Endothelial cell of umbilical vein (primary cell): ENCODE measurements at regions of chr1 and their contacts with region 1.

Region 1: GRCh38 chr1:241485554-241485992 is 34.0 kb downstream of the FH start:
- DNase-seq: peak; percentile 44
- H3K4me3 ChIP-seq: no peak overlapping the region
- H3K27ac ChIP-seq: no peak overlapping the region
- H3K4me1 ChIP-seq: peaks cover 40% of the 10 kb centered on the region
- H3K27me3 ChIP-seq: no peaks in the 10 kb centered on the region
- CTCF ChIP-seq: peak; percentile 49 to 53
- POLR2A ChIP-seq: no peak

Region 2: DNA sequence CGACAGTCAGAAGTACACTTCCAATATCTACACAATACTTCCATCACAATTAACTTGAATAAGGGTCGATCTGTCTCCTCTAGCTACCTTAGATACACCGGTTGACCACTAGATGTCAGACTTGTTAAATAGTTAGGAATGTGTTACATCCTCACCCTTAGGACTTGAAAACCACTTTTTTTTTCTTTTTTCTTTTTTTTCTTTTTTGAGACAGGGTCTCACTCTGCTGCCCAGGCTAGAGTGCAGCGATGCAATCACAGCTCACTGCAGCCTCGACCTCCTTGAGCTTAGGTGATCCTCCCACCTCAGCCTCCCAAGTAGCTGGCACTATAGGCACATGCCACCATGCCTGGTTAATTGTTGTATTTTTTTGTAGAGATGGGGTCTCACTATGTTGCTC is 753.2 kb before region 1 on chr1:
- CTCF ChIA-PET with region 1: interaction called, 56 read pairs
- POLR2A ChIA-PET with region 1: no interaction called
- dilution Hi-C with region 1: no loop called
- intact Hi-C with region 1: loop called (anchors 1 kb)
- DNase-seq: peak; percentile 70
- H3K4me3 ChIP-seq: no peak overlapping the region
- H3K27ac ChIP-seq: no peak overlapping the region
- H3K4me1 ChIP-seq: no peaks in the 10 kb centered on the region
- H3K27me3 ChIP-seq: no peaks in the 10 kb centered on the region
- CTCF ChIP-seq: peak; percentile 55
- POLR2A ChIP-seq: no peak

Region 3: DNA sequence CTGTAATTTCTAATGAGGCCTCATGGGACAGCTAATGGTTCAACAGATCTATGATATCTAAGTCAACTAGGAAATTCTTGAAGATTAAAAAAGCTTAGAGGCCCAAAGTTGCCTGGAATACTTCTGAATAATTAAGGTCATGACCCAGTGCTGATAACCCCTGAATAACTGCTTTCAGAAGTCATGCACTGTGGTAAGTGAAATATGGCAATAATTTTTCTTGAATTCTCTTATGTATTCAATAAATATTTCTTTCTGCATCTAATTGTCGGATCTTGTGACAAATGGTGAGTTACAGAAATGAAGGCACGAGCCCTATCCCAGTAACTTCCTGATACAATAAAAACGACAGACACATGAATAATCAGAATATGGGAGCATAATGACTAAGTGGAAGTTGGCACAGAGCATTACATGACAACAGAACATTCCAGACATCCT is 654.4 kb before region 1 on chr1:
- CTCF ChIA-PET with region 1: interaction called, 13 read pairs
- POLR2A ChIA-PET with region 1: no interaction called
- dilution Hi-C with region 1: no loop called
- intact Hi-C with region 1: loop called (anchors 2 kb)
- DNase-seq: peak; percentile 89
- H3K4me3 ChIP-seq: no peak overlapping the region
- H3K27ac ChIP-seq: peak overlapping the region; percentile 67
- H3K4me1 ChIP-seq: peaks cover 13% of the 10 kb centered on the region
- H3K27me3 ChIP-seq: no peaks in the 10 kb centered on the region
- CTCF ChIP-seq: no peak
- POLR2A ChIP-seq: no peak

Region 4: DNA sequence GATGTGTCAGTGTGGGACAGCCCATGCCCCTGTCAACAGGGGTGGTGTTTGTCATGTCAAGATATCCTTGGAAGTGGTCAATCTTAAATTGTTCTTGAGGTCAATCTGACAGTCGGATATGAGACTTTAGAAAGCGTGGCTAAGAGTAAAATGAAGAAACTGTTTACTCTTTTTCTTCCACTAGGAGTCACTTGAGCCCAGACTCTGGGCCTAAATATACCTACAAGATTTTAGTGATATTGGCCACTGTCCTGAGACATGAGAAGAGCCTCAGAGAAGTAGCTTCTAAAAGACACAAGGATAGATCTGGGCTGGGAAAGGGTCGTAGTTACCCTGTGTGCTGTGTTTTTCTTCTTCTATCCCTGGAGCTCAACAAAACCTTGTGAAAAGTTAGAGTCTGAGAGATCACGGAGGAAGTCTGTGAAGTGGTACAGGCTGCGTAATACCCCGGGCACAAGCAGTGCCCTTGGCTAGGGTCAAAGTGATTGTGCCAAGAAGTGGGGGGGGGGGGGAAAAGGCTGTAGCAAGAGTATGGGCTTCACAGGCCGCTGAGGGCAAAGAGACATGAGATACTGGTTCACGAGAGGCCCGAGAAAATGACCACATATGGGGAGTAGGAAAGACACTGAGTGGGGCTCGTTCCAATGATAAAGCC is 518.4 kb before region 1 on chr1:
- CTCF ChIA-PET with region 1: interaction called, 24 read pairs
- POLR2A ChIA-PET with region 1: no interaction called
- dilution Hi-C with region 1: no loop called
- intact Hi-C with region 1: no loop called
- DNase-seq: peak; percentile 4
- H3K4me3 ChIP-seq: no peak overlapping the region
- H3K27ac ChIP-seq: no peak overlapping the region
- H3K4me1 ChIP-seq: no peaks in the 10 kb centered on the region
- H3K27me3 ChIP-seq: no peaks in the 10 kb centered on the region
- CTCF ChIP-seq: peak in 1 of 2 donors; percentile 6
- POLR2A ChIP-seq: no peak

Region 5: DNA sequence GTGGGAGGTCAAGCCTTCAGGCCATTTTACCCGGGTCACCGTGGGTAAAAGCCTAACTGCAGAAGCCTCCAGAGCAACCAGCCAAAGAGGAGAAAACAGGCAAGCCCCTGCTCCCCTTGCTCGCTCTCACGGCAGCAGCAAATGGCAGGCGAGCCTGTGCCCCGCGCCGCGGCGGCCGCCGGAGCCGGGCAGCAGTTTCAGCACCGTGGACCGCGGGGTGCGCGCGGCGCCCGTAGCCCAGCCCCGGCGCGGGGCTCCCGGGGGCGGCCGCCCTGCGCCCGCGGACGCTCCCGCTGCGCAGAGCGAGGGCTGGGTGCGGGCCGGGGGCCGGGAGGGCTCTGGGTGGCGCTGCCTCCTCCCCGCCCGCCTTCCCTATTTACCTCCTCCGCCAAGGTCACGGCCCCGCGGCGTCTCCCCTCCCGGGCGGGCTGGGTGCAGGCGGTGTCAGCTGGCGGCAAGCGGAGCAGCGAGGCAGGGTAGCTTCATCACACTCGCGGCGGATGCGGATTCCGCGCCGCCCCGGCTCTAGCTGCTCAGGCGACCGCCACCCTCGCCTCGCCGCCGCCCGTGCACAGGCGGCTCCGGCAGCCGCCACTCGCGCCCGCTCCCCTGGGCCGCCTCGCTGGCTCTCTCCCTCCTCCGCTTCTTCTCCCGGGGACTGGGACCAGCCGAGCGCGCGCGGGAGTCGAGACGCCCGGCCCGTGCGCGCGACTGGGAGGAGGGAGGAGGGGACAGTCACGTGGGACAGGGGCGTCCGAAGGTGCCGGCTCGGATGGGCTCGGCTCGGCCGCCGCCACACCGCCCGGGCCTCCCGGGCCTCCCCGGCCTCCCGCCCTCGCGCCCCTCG is 128.8 kb before region 1 on chr1 and contains the start of gene RGS7:
- CTCF ChIA-PET with region 1: interaction called, 10 read pairs
- POLR2A ChIA-PET with region 1: no interaction called
- dilution Hi-C with region 1: no loop called
- intact Hi-C with region 1: loop called (anchors 2 kb)
- DNase-seq: peak; percentile 60
- H3K4me3 ChIP-seq: peak within 1 kb of the TSS; percentile 43 to 71 (median 45)
- H3K27ac ChIP-seq: no peak within 1 kb of the TSS
- H3K4me1 ChIP-seq: peaks cover 3% of the 10 kb centered on the region
- H3K27me3 ChIP-seq: no peaks in the 10 kb centered on the region
- CTCF ChIP-seq: no peak
- POLR2A ChIP-seq: no peak
- total RNA-seq, gene RGS7: 0.44 and 1.2 TPM in 2 replicates

Region 6: DNA sequence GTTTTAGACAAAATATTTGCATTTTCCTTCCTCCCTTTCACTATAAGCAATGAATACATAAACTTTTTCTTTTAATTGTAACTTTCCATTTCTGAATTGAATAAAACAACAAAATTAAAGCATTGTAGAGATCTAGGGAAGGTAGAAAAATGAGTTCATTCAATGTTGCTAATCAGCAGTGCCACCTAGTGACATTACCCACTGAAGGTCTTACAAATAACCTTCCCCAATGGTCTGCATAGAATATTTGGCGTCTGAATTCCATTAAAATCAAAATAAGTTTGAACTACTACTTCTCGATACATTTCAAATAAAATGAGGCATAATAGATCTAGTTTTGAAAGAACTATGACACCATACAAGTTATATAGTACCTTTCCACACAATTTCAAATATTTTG is 14.3 kb after region 1 on chr1:
- CTCF ChIA-PET with region 1: interaction called, 10 read pairs
- POLR2A ChIA-PET with region 1: no interaction called
- dilution Hi-C with region 1: no loop called
- intact Hi-C with region 1: no loop called
- DNase-seq: peak; percentile 59
- H3K4me3 ChIP-seq: no peak overlapping the region
- H3K27ac ChIP-seq: no peak overlapping the region
- H3K4me1 ChIP-seq: no peaks in the 10 kb centered on the region
- H3K27me3 ChIP-seq: no peaks in the 10 kb centered on the region
- CTCF ChIP-seq: peak; percentile 24 to 42
- POLR2A ChIP-seq: no peak

Region 7: DNA sequence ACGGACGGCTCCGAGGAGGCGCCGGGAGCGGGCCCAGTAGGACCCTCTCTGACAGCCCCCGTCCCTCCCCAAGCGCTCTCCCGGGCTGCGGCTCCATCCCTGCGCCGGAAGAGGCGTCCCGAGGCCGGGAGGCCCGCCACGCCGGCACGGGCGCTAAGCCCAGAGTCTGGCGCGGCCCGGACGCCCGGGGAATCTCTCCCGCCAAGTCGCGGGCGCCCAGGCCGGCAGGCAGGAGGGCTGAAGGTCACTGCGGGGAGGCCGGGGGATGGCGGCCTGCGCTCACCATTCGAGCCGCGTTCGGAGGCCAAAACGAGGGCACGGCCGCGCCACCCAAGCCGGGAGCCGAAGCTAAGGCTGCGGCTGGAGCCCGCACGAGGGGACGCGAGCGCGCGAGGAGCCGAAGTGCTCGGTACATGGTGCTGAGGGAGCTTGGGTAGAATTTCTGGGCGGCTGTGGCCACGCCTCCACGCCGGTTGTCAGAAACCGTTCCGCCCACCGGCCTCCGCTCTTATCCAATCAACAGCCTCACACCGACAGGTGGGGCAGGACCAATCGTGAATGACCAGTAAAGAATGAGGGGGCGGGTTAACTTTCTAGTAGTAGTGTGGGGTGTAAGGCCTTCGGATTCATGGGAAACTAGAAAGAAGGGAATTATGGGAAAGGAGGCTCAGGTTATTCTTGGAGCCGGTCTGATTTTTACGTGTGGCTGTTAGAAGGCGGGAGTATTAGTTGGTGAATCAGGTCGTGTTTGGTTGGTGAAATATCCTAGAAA is 33.9 kb after region 1 on chr1 and contains the start of gene FH:
- CTCF ChIA-PET with region 1: interaction called, 3 read pairs
- POLR2A ChIA-PET with region 1: no interaction called
- dilution Hi-C with region 1: no loop called
- intact Hi-C with region 1: loop called (anchors 1 kb)
- DNase-seq: peak; percentile 98
- H3K4me3 ChIP-seq: peak within 1 kb of the TSS; percentile 89 to 93 (median 93)
- H3K27ac ChIP-seq: peak within 1 kb of the TSS; percentile 37
- H3K4me1 ChIP-seq: peaks cover 13% of the 10 kb centered on the region
- H3K27me3 ChIP-seq: peaks cover 14 to 38% of the 10 kb centered on the region in 2 experiments
- CTCF ChIP-seq: no peak
- POLR2A ChIP-seq: peak; percentile 94
- total RNA-seq, gene FH: 96.6 and 105 TPM in 2 replicates

Region 8: DNA sequence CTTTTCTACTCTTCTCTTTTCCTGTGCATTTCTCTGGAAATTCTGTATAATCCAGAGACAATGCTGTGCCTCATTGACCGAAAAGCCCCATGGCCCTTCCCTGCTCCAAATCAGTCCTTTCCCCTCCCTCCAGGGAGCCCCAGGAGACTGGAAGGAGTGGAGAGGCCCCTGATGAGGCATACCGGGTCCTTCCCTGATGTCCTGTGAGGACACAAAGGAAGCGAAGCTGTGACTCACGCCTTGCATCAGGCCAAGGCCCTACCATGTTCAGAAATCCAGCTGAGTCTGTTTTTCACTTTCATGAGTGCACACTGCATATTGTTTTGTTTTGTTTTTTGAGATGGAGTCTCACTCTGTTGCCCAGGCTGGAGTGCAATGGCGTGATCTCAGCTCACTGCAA is 433.3 kb after region 1 on chr1:
- CTCF ChIA-PET with region 1: no interaction called
- POLR2A ChIA-PET with region 1: no interaction called
- dilution Hi-C with region 1: no loop called
- intact Hi-C with region 1: no loop called
- DNase-seq: no peak
- H3K4me3 ChIP-seq: no peak overlapping the region
- H3K27ac ChIP-seq: no peak overlapping the region
- H3K4me1 ChIP-seq: no peaks in the 10 kb centered on the region
- H3K27me3 ChIP-seq: no peaks in the 10 kb centered on the region
- CTCF ChIP-seq: no peak
- POLR2A ChIP-seq: no peak